H1 (cell line): ENCODE measurements at regions of chr16 and their contacts with region 1.

Region 1: DNA sequence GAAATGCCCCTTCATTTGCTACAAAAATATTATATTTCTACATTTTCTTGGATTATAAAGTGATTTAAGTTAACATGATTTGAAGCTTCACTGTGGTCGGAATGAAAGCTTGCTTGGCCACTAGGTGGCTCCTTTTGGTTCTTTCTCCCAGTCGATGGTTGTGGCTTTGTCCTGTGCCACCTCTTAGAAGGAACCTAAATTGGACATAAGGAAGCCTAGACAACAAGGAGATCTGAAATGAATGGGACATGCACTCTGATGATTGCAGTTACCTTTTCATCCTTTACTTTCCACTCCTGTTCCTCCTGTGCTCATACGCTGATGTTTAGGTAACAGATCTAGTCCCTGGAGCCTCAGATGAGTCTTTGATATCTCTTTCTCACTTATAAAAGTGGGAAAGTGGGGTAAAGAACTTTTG is 39.2 kb downstream of the FTO start:
- DNase-seq: no peak
- H3K4me3 ChIP-seq: no peak overlapping the region
- H3K27ac ChIP-seq: no peak overlapping the region
- H3K4me1 ChIP-seq: peaks cover 0 to 7% (median 2%) of the 10 kb centered on the region in 4 experiments; a peak in 6 of 7 replicates
- H3K27me3 ChIP-seq: no peaks in the 10 kb centered on the region
- CTCF ChIP-seq: peak; percentile 49 to 75 (median 56)
- EP300 ChIP-seq: no peak
- POLR2A ChIP-seq: no peak
- RAD21 ChIP-seq: peak; percentile 34 to 48; a peak in 3 of 4 replicates

Region 2: DNA sequence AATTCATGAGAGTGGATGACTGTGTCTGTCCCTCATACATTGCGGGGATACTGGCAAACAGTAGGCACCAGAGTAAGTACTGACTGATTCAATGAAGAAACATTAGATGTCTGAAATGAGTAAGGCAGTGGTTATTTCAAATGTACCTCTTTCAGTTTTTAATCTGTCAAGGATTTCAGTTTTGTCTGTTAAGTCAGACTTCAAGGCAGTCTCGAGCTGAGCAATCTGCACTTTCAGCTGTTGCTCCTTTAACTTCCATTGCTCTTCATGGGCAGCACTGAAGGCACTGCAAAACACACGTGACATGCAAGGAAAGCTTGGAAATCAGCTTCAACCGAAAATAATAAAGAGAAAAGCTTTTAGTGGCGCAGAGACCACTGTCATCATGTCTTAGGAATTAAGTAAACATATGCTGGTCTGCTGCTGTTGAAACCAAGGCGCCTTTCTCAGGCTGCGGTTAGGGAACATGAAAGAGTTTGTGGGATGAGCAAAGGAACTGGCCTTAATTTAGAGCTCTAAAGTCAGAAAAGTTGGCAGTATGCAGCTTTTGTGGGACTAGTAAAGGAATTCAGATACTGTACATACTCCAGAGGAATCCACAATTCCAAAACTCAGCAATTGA is 78.3 kb before region 1 on chr16:
- CTCF ChIA-PET with region 1: no interaction called
- POLR2A ChIA-PET with region 1: no interaction called
- DNase-seq: no peak
- H3K4me3 ChIP-seq: no peak overlapping the region
- H3K27ac ChIP-seq: no peak overlapping the region
- H3K4me1 ChIP-seq: no peaks in the 10 kb centered on the region; a peak in 1 of 7 replicates
- H3K27me3 ChIP-seq: no peaks in the 10 kb centered on the region
- CTCF ChIP-seq: no peak
- EP300 ChIP-seq: no peak
- POLR2A ChIP-seq: no peak
- RAD21 ChIP-seq: no peak

Region 3: DNA sequence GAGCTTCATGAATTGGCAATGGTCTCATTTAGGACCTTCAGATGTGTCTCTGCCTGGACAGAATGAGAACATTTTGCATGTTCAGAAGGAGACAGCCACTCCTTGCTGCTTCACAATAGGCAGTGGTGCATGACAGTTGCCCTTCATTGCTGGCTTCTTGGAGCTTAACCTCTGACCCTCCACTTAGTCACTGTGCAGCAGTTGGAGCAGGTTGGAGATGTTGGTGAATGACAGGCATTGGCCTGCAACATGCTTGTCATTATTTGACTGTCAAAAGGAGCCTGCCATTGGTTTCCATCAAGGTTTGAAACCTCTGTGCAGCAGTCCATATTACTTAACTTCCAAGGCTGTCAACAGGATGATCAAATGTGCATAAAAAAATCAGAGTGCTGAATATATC is 16.5 kb before region 1 on chr16:
- CTCF ChIA-PET with region 1: interaction called, 40 read pairs
- POLR2A ChIA-PET with region 1: no interaction called
- DNase-seq: no peak
- H3K4me3 ChIP-seq: no peak overlapping the region
- H3K27ac ChIP-seq: no peak overlapping the region
- H3K4me1 ChIP-seq: no peaks in the 10 kb centered on the region; a peak in 1 of 7 replicates
- H3K27me3 ChIP-seq: no peaks in the 10 kb centered on the region
- CTCF ChIP-seq: no peak
- EP300 ChIP-seq: no peak
- POLR2A ChIP-seq: no peak
- RAD21 ChIP-seq: no peak

Region 4: DNA sequence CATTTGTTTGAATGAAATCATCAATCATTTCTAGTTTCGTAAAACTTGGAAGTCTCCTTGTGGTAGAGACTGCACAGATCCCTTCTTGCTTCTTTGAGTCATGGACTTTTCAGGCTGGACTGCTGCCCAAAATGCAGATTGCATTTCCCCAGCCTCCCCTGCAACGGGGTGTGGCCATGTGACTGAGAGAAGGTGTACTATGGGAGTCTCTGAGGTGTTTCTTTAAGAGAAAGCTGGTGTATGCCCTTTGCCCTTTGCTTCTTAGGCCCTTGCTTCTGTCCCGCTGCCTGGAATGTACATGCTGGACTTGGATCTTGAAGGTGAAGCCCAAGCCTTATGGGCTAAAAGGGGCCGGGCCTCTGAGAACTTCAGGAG is 12.4 kb after region 1 on chr16:
- CTCF ChIA-PET with region 1: interaction called, 48 read pairs
- POLR2A ChIA-PET with region 1: no interaction called
- DNase-seq: no peak
- H3K4me3 ChIP-seq: no peak overlapping the region
- H3K27ac ChIP-seq: no peak overlapping the region
- H3K4me1 ChIP-seq: no peaks in the 10 kb centered on the region; a peak in 1 of 7 replicates
- H3K27me3 ChIP-seq: no peaks in the 10 kb centered on the region
- CTCF ChIP-seq: no peak
- EP300 ChIP-seq: no peak
- POLR2A ChIP-seq: no peak
- RAD21 ChIP-seq: no peak

Region 5: DNA sequence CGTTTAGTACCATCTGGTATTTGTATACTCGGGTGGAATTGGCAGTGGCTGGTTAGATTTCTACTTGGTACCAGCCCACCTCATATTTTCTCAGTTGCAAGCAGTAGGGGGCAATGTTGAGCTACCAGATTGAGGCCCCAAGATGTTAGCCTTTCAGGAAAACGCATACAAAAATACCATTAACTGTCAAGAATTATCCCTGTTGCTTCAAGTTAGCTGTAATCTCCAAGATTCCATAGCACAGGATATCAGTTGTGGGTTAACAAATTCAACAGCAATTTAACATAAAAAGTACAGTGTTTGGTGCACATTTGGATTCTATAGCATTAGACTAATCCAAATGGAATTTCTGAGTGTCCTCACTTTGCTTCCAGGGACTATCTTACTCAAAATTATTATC is 149.0 kb after region 1 on chr16:
- CTCF ChIA-PET with region 1: interaction called, 15 read pairs
- POLR2A ChIA-PET with region 1: no interaction called
- DNase-seq: peak in 1 of 2 experiments; percentile 61
- H3K4me3 ChIP-seq: no peak overlapping the region
- H3K27ac ChIP-seq: no peak overlapping the region
- H3K4me1 ChIP-seq: no peaks in the 10 kb centered on the region; a peak in 1 of 7 replicates
- H3K27me3 ChIP-seq: no peaks in the 10 kb centered on the region
- CTCF ChIP-seq: peak in 2 of 3 experiments; percentile 63 to 68; a peak in 3 of 4 replicates
- EP300 ChIP-seq: no peak
- POLR2A ChIP-seq: no peak
- RAD21 ChIP-seq: peak; percentile 78 to 82